PC-3 (cell line): ENCODE measurements at regions of chr12 and their contacts with region 1.

Region 1: DNA sequence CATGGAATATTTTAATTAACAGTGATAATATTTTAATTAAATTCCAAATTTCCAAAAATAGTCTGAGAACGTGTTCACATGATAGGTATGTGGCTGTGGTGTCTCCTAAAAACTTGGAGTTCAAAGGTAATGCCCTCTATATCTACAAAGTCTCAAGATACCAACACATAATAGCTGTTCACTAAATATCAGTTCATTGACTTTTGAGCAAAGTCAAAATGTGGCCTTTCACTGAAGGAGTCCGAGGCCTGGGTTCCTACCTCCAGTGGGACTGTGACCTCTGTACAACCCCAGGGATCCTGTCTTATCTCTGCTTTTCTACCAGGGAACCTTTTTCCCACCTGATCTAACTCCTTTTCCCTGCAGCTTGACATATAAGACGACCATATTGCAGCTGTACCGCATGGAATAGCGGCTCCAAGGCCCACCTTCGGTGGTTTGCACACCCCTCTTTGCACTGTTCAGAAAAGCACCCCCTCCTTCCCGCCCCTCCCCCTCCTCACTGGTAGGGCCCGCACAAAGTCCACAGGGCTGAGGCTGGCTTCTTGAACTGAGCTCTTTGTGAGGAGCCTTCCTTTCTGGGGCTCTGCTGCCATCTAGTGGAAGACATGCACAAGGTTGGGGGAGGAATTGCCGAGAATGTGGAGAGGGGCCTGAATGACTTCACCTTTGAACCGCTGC is 3.1 kb downstream of the CCND2 start:
- DNase-seq: peak; percentile 72
- ATAC-seq: peak; percentile 86
- H3K4me3 ChIP-seq: no peak overlapping the region
- H3K27ac ChIP-seq: no peak overlapping the region
- H3K4me1 ChIP-seq: no peaks in the 10 kb centered on the region
- H3K27me3 ChIP-seq: peaks cover 77% of the 10 kb centered on the region
- CTCF ChIP-seq: peak; percentile 79

Region 2: GRCh38 chr12:3885277-3886094 is 391.2 kb before region 1 on chr12:
- CTCF ChIA-PET with region 1: interaction called, 10 read pairs
- POLR2A ChIA-PET with region 1: no interaction called
- intact Hi-C with region 1: loop called (anchors 1 kb)
- DNase-seq: peak; percentile 40
- ATAC-seq: no peak
- H3K4me3 ChIP-seq: no peak overlapping the region
- H3K27ac ChIP-seq: no peak overlapping the region
- H3K4me1 ChIP-seq: no peaks in the 10 kb centered on the region
- H3K27me3 ChIP-seq: peaks cover 31% of the 10 kb centered on the region
- CTCF ChIP-seq: peak; percentile 79

Region 3: DNA sequence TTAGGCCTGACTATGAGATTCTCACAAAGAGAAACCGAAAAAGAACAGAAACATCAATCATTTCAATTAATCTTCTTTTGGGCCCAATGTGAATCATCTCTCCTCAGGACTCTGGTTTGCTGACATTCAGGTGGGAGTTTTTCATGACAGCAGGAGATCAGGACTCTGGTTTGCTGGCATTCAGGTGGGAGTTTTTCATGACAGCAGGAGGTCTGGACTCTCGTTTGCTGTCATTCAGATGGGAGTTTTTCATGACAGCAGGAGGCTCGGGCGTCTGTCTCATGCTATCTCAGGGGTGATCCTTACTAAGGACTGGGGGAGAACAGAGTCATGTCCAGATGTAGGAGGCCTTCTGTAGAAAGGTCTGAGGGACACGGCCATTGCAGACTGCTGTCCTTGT is 363.4 kb before region 1 on chr12:
- CTCF ChIA-PET with region 1: no interaction called
- POLR2A ChIA-PET with region 1: no interaction called
- intact Hi-C with region 1: no loop called
- DNase-seq: no peak
- ATAC-seq: no peak
- H3K4me3 ChIP-seq: no peak overlapping the region
- H3K27ac ChIP-seq: no peak overlapping the region
- H3K4me1 ChIP-seq: no peaks in the 10 kb centered on the region
- H3K27me3 ChIP-seq: peaks cover 37% of the 10 kb centered on the region
- CTCF ChIP-seq: no peak

Region 4: GRCh38 chr12:3995306-3995705 is 281.4 kb before region 1 on chr12:
- CTCF ChIA-PET with region 1: interaction called, 3 read pairs
- POLR2A ChIA-PET with region 1: no interaction called
- intact Hi-C with region 1: loop called (anchors 2 kb)
- DNase-seq: no peak
- ATAC-seq: no peak
- H3K4me3 ChIP-seq: no peak overlapping the region
- H3K27ac ChIP-seq: no peak overlapping the region
- H3K4me1 ChIP-seq: no peaks in the 10 kb centered on the region
- H3K27me3 ChIP-seq: peaks cover 40% of the 10 kb centered on the region
- CTCF ChIP-seq: no peak

Region 5: DNA sequence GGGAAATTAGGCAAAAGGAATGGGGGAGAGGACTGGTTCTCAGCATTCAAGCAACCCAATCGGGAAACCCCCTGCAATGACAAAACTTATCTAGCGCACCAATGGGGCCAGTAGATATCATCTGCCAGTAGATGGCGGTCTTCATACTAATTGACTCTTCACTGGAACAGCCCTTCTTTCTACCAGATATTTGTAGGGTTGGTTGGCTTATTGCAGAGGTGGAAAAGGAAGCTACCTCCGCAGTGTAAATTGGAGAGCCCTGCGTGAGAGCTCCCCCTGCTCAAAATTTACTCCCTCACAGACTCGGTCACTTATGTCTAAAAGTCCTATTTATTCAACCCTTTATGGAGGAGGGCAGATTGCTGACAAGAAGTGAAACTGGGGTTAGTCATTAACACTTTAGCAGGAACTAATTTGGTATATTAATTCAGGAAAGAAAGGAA is 169.2 kb before region 1 on chr12:
- CTCF ChIA-PET with region 1: interaction called, 5 read pairs
- POLR2A ChIA-PET with region 1: no interaction called
- intact Hi-C with region 1: loop called (anchors 2 kb)
- DNase-seq: peak; percentile 37
- ATAC-seq: peak; percentile 43
- H3K4me3 ChIP-seq: no peak overlapping the region
- H3K27ac ChIP-seq: no peak overlapping the region
- H3K4me1 ChIP-seq: no peaks in the 10 kb centered on the region
- H3K27me3 ChIP-seq: peaks cover 30% of the 10 kb centered on the region
- CTCF ChIP-seq: peak; percentile 53

Region 6: GRCh38 chr12:4567073-4567881 is 290.6 kb after region 1 on chr12:
- CTCF ChIA-PET with region 1: no interaction called
- POLR2A ChIA-PET with region 1: no interaction called
- intact Hi-C with region 1: no loop called
- DNase-seq: no peak
- ATAC-seq: no peak
- H3K4me3 ChIP-seq: no peak overlapping the region
- H3K27ac ChIP-seq: no peak overlapping the region
- H3K4me1 ChIP-seq: no peaks in the 10 kb centered on the region
- H3K27me3 ChIP-seq: no peaks in the 10 kb centered on the region
- CTCF ChIP-seq: no peak